ENCODE measurements at regions of chr10 and their contacts with region 1.

Region 1: GRCh38 chr10:28381903-28382347 is 79.1 kb upstream of the MPP7 start:
- DNase-seq: peak; percentile 83
- H3K4me3 ChIP-seq: no peak overlapping the region
- H3K27ac ChIP-seq: no peak overlapping the region
- H3K4me1 ChIP-seq: peaks cover under 1% of the 10 kb centered on the region
- H3K27me3 ChIP-seq: no peaks in the 10 kb centered on the region
- CTCF ChIP-seq: peak; percentile 90 to 93

Region 2: DNA sequence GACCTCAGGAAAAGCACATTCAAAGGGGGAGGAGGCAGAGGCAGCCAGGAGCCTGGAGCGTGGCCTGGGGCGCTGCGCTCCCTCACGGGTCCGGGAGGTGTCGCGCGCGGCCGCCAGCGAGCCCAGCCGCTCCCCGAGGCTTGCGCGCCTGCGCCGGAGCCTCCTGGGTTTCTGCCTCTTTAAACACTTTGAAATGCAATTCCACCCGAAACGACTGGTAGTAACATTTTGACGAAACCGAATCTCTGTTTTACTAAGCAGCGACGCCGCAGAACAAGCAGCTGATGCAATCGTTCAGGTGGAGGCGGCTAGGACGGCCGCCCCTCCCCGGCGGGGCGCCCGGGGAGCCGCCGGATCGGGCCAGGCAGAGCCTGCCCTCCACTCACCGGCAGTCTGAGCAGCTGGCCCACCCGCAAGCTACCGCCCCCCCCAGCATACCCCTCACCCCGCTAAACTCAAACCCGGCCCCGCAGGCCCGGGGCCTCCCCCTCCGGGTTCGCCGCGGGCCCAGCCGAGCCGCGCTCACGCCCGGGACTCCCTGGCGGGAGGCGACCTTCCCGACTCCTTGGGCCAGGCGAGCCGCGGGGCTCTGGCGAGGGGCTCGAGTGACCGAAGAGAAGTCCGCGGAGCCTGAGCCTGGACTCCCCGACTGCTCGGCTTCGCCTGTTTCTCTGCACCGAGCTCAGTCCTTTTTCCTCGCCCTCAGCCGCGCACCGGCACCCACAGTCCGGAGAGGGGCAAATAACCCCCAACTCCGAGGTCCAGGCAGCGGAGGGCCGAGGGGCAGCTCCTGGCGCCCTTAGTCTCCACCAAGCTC is 639.5 kb before region 1 on chr10:
- CTCF ChIA-PET with region 1: no interaction called
- dilution Hi-C with region 1: no loop called
- in situ Hi-C with region 1: loop called in 1 of 2 experiments (anchors 25 kb)
- intact Hi-C with region 1: no loop called
- DNase-seq: peak; percentile 63
- H3K4me3 ChIP-seq: peak overlapping the region; percentile 41 to 47 (median 43)
- H3K27ac ChIP-seq: no peak overlapping the region
- H3K4me1 ChIP-seq: peaks cover 26% of the 10 kb centered on the region
- H3K27me3 ChIP-seq: peaks cover 48% of the 10 kb centered on the region
- CTCF ChIP-seq: peak; percentile 35 to 60

Region 3: GRCh38 chr10:27783660-27784059 is 598.3 kb before region 1 on chr10:
- CTCF ChIA-PET with region 1: no interaction called
- dilution Hi-C with region 1: no loop called
- in situ Hi-C with region 1: no loop called
- intact Hi-C with region 1: loop called (anchors 5 kb)
- DNase-seq: peak; percentile 55
- H3K4me3 ChIP-seq: no peak overlapping the region
- H3K27ac ChIP-seq: no peak overlapping the region
- H3K4me1 ChIP-seq: no peaks in the 10 kb centered on the region
- H3K27me3 ChIP-seq: peaks cover 3% of the 10 kb centered on the region
- CTCF ChIP-seq: peak; percentile 29 to 52

Region 4: GRCh38 chr10:27801171-27801785 is 580.6 kb before region 1 on chr10:
- CTCF ChIA-PET with region 1: no interaction called
- dilution Hi-C with region 1: no loop called
- in situ Hi-C with region 1: no loop called
- intact Hi-C with region 1: no loop called
- DNase-seq: peak; percentile 51
- H3K4me3 ChIP-seq: no peak overlapping the region
- H3K27ac ChIP-seq: no peak overlapping the region
- H3K4me1 ChIP-seq: no peaks in the 10 kb centered on the region
- H3K27me3 ChIP-seq: peaks cover 7% of the 10 kb centered on the region
- CTCF ChIP-seq: no peak

Region 5: DNA sequence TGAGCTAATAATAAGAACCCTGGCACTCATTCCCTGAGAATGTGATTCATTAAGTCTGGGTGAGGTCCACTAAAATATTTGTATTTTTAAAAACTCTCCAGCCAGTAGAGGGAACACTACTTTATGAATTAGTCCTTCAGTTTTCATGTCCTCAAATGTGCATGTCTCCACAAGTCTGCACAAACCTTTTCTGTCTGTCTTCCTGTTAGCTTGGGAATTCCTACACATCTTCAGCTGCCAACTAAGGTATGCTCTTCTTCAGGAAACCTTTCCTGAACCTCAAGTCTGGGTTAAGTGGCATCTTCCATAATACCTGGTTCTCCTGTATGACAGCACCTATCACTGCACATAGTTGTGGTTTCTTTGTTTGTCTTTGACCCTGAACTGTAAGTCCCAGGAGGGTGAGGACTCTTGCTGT is 516.7 kb before region 1 on chr10:
- CTCF ChIA-PET with region 1: no interaction called
- dilution Hi-C with region 1: no loop called
- in situ Hi-C with region 1: no loop called
- intact Hi-C with region 1: loop called (anchors 10 kb)
- DNase-seq: peak; percentile 89
- H3K4me3 ChIP-seq: no peak overlapping the region
- H3K27ac ChIP-seq: no peak overlapping the region
- H3K4me1 ChIP-seq: peaks cover 13% of the 10 kb centered on the region
- H3K27me3 ChIP-seq: no peaks in the 10 kb centered on the region
- CTCF ChIP-seq: peak in 1 of 2 donors; percentile 31

Region 6: DNA sequence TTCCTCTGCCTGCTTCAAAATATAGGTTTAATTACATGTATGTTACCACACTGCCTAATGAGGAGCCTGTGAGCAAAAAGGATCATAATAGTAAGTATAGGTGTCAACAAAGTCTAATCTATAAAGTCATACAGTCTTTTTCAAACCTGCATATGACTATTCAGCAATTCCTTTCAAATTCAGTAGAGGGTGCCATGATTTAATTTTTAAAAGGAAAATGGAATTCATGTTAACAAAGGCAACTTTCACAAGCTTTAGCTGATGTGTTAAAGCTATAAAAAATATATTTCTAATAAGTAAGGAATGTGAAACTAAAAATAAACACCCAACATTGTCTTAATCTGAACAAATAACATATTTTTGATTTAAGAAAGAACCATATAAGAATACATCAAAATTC is 131.1 kb before region 1 on chr10:
- CTCF ChIA-PET with region 1: interaction called, 6 read pairs
- dilution Hi-C with region 1: no loop called
- in situ Hi-C with region 1: loop called (anchors 5 kb)
- intact Hi-C with region 1: loop called (anchors 1 kb)
- DNase-seq: peak; percentile 35
- H3K4me3 ChIP-seq: no peak overlapping the region
- H3K27ac ChIP-seq: no peak overlapping the region
- H3K4me1 ChIP-seq: peaks cover 41% of the 10 kb centered on the region
- H3K27me3 ChIP-seq: no peaks in the 10 kb centered on the region
- CTCF ChIP-seq: peak; percentile 53 to 57

Region 7: DNA sequence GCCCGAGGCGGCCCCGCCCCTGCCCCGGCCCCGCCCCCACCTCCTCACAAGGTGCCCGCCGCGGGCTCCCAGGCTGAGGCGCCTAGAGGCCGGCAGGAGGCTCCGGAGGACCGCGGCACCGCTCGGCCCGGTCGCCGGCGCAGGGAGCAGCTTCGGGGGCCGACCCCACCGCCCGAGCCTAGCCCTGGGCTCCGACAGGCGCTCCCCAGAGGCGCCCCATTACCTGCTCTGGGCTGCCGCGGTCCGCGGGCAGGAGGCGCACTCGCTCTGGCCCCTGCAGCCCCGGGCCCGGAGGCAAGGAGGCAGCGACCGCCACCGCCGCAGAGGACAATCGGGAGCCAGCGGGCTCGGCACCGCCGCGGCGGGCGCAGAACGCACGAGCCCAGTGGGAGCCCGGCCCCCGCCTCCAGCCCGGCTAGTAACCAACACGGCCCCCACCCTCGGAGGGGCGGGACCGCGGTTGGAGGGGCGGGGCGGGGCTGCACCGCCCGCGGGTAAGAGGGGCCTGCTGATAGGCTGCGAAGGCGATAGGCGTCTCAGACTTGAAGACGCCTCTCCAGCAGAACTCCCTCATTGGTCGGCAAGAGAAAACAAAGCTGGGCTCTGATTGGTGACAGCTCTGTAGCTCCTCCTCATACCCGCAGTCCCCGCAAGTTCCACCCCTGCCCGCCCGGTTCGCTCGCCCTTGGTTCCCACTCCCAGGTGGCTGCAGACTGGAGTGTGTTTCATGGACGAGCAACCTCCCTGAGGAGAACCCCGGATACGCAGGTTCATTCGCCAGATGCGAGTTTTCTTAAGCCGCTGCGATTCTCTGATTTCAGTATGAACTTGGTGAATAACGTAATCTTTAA is 79.1 kb before region 1 on chr10 and contains the start of gene MPP7:
- CTCF ChIA-PET with region 1: interaction called, 3 read pairs
- dilution Hi-C with region 1: no loop called
- in situ Hi-C with region 1: no loop called
- intact Hi-C with region 1: loop called (anchors 1 kb)
- DNase-seq: peak; percentile 99
- H3K4me3 ChIP-seq: peak within 1 kb of the TSS; percentile 72 to 97 (median 84)
- H3K27ac ChIP-seq: peak within 1 kb of the TSS; percentile 53
- H3K4me1 ChIP-seq: peaks cover 8% of the 10 kb centered on the region
- H3K27me3 ChIP-seq: no peaks in the 10 kb centered on the region
- CTCF ChIP-seq: peak in 1 of 2 donors; percentile 40
- total RNA-seq, gene MPP7: 10.0 to 23.0 TPM

Measured in mammary epithelial cell (primary cell).